ENCODE measurements at regions of chr18 and their contacts with region 1.

Region 1: GRCh38 chr18:76426737-76427305 is 68.2 kb downstream of the ZNF516 start:
- DNase-seq: no peak
- H3K4me3 Mint-ChIP-seq: no peak overlapping the region
- H3K27ac Mint-ChIP-seq: no peak overlapping the region
- H3K4me1 Mint-ChIP-seq: no peaks in the 10 kb centered on the region
- H3K27me3 Mint-ChIP-seq: peaks cover 6% of the 10 kb centered on the region

Region 2: DNA sequence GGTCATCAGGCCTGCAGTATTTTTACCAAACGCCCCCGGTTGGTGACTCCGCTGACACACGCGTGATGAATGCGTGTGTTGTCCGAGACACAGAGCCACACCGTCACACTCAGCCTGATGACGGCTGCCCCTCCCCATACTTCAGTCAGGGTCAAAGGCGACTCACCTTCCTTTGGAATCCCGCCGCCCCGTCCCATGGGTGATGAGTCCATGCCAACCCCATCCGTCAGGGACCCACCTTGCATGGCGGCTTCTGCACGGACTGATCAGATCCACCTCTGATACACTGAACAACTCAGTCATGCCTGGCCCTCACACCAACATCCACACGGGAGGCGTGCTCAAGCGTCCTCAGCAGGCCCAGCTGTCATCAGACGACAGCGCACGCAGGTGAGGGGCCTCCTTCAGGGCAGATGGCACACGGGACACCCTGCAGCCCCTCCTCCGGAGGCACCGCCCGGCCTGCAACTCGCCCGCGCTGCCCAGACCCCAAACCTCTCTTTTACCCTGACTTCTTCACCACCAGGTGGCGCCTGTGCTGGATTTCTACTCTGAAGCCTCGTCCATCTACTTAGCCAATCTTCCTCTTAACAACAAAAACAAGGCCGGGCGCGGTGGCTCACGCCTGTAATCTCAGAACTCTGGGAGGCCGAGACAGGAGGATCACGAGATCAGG is 21.0 kb before region 1 on chr18:
- intact Hi-C with region 1: loop called (anchors 1 kb)
- DNase-seq: peak; percentile 12
- H3K4me3 Mint-ChIP-seq: no peak overlapping the region
- H3K27ac Mint-ChIP-seq: no peak overlapping the region
- H3K4me1 Mint-ChIP-seq: peaks cover 7% of the 10 kb centered on the region
- H3K27me3 Mint-ChIP-seq: peaks cover 3% of the 10 kb centered on the region

Region 3: GRCh38 chr18:76610933-76611749 is 184.3 kb after region 1 on chr18:
- intact Hi-C with region 1: no loop called
- DNase-seq: no peak
- H3K4me3 Mint-ChIP-seq: no peak overlapping the region
- H3K27ac Mint-ChIP-seq: no peak overlapping the region
- H3K4me1 Mint-ChIP-seq: no peaks in the 10 kb centered on the region
- H3K27me3 Mint-ChIP-seq: peaks cover 3% of the 10 kb centered on the region

Measured in activated T-helper 1 cell treated with anti-CD3 and anti-CD28 coated beads, Interleukin-12 subunit alpha, Interleukin-12 subunit beta, Interleukin-2, Interleukin-4 antibody, amounts not matched to agents 30 ng/mL and 10 ng/mL and 1 ng/mL, durations not matched to agents 14 hours and 24 hours and 36 hours (primary cell).